Right ventricle myocardium inferior (tissue), 1 donor: ENCODE measurements at regions of chr17 and their contacts with region 1.

Region 1: DNA sequence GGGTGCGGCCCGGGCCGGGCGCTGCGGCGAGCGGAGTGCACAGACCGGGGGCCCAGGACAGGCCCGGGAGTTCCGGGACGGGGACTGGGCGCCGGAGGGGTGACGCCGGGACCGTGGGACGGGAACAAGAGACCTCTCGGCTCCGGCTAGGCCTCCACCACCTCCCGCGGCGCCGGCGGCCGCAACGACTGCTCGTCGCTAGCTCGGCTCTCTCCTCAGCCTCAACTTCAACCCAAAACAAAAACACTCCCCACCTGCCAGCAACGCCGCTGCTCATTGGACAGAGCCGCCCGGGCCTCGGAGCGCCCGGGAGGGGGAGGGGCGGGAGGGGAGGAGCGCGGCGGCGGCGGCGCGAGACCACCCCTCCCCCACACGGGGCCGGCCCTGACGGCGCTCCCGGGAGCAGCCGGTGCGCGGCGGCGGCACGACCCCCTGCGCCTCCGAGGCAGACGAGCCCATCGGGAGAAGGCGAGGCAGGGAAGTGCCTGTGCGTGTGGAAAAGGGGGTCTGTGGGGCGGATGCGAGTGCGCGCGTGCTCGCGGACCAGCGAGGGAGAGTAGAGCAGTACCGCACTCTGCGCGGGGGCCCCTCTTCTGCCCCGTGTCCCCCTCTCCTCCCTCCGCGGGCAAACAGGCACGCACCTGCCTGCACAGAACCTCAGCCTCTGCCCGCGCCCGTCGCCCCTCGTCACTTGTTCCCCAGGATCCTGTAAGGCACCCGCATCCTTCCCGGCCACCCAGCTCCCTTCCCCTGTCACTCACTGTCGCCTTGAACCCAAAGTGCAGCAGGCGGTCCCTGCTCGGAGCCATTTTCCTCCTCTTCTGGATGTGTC is at the start of gene FBXL20:
- DNase-seq: peak; percentile 97
- ATAC-seq: peak; percentile 95
- total RNA-seq, gene FBXL20: 12.7 TPM

Region 2: DNA sequence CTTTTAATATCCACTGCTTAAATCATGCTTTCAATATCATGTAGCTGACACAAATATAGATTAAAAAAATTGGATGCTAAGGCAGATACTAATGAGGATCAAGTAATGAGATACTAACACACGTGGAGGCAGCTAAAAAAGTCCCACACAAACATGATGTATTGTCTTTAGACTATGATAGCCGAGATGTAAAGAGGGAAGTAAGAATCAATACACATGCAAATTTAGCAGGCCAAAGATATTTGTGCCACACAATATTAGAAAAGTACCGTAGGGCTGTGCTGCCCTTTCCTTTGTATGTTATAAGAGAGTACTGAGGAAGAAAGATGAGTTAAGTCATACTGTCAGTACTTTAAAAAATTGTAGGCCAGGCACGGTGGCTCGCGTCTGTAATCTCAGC is 124.5 kb before region 1 on chr17:
- intact Hi-C with region 1: loop called (anchors 5 kb)
- DNase-seq: no peak
- ATAC-seq: no peak

Region 3: GRCh38 chr17:39461113-39461925 is 59.7 kb after region 1 on chr17 and contains the start of gene CDK12:
- intact Hi-C with region 1: loop called (anchors 5 kb)
- DNase-seq: peak; percentile 93
- ATAC-seq: peak; percentile 94
- total RNA-seq, gene CDK12: 18.8 TPM